GM12878 (cell line): ENCODE measurements at regions of chr2 and their contacts with region 1.

Region 1: DNA sequence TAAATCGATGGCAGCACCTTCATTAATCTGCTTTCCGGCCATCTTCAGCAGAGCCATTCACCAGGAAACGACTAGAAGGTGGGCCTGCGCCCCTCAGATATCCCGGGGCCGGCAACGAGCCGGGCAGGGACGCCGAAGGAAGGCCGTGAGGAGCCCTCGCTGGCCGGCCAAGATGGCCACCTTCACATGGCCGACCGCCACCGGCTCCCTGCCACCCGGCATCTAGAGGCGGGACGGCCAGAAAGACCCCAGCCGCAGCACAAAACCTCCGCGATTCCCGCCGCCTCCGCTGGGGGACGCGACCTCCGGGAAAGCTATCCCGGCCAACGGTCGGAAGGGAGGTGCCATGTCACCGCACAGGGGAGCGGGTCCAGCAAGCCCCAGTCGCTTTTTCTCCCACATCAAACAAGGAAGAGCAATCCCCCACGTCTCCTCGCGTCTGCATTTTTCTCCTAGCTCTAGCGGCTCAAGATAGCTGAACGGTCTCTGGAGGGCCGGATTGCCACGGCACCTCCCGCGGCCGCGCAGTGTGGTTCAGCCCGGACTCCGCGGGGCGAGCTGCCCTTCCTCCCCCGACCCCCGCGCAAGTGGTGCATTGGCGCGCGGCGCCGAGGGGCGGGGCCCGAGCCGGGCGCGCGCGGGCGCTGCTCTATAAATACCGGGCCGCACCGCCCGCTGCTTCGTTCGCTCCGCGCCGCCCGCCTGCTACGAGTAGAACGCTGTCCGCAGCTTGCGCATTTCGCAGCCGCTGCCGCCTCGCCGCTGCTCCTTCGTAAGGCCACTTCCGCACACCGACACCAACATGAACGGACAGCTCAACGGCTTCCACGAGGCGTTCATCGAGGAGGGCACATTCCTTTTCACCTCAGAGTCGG is at the start of gene MAT2A:
- DNase-seq: peak; percentile 56
- ATAC-seq: peak; percentile 81
- H3K4me3 ChIP-seq: peak within 1 kb of the TSS; percentile 86
- H3K27ac ChIP-seq: peak within 1 kb of the TSS; percentile 100
- H3K4me1 ChIP-seq: no peaks in the 10 kb centered on the region
- H3K27me3 ChIP-seq: no peaks in the 10 kb centered on the region
- CTCF ChIP-seq: peak; percentile 65 to 77 (median 74)
- EP300 ChIP-seq: no peak
- POLR2A ChIP-seq: peak; percentile 82
- RAD21 ChIP-seq: no peak
- polyA plus RNA-seq, gene MAT2A: 97.6 to 127 TPM

Region 2: GRCh38 chr2:85354286-85355072 is 184.2 kb before region 1 on chr2 and contains the starts of genes ELMOD3 and RETSAT:
- CTCF ChIA-PET with region 1: interaction called, 3 read pairs
- POLR2A ChIA-PET with region 1: interaction called, 9 read pairs
- RAD21 ChIA-PET with region 1: no interaction called
- SMC1A ChIA-PET with region 1: interaction called, 3 read pairs
- in situ Hi-C with region 1: no loop called
- intact Hi-C with region 1: loop called (anchors 2 kb)
- DNase-seq: peak; percentile 97
- ATAC-seq: peak; percentile 98
- H3K4me3 ChIP-seq: peak within 1 kb of the TSS; percentile 87
- H3K27ac ChIP-seq: peak within 1 kb of the TSS; percentile 74
- H3K4me1 ChIP-seq: peaks cover 4% of the 10 kb centered on the region
- H3K27me3 ChIP-seq: no peaks in the 10 kb centered on the region
- CTCF ChIP-seq: no peak
- EP300 ChIP-seq: no peak; a peak in 1 of 4 replicates
- POLR2A ChIP-seq: peak; percentile 99
- RAD21 ChIP-seq: no peak
- polyA plus RNA-seq, gene ELMOD3: 1.2 to 2.7 TPM
- polyA plus RNA-seq, gene RETSAT: 3.3 to 4.4 TPM

Region 3: DNA sequence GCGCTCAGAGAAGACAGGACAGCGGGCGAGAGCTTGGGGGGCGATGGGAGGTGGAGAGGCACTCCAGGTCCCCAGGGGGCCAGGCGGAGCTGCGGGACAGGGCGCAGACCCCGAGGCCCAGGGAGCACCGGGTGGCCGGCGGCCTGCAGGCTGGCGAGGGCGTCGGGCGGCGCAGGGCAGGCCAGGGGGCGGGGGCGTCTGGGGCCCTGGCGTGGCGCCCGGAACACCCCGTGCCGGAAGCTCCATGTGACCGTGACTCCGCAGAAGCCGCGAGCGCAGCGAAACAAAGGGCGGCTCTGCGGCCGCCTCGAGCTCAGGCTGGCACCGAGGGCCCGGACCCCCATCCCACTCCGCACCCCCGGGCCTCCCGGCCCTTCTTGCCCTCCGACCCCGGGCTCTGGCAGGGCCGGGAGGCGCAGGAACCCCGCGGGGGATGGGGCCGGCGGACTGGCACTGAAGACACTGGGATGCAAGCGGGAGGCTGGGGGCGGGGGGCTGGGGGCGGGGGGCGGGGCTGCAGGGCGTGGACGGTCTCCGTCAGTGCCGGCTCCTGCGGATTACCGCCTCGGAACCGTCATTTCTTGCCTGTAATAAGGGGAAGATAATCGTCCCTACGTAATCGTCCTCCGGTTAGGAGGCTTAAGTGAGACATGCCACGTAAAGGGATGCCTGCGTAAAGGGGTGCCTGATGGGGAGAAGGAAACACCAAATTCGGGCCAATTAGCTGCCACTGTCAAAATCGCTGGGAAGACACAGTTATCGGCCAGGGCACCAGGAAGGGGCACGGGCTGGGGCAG is 101.0 kb before region 1 on chr2:
- CTCF ChIA-PET with region 1: no interaction called
- POLR2A ChIA-PET with region 1: interaction called, 11 read pairs
- RAD21 ChIA-PET with region 1: interaction called, 16 read pairs
- SMC1A ChIA-PET with region 1: interaction called, 18 read pairs
- in situ Hi-C with region 1: no loop called
- intact Hi-C with region 1: no loop called
- DNase-seq: no peak
- ATAC-seq: peak; percentile 94
- H3K4me3 ChIP-seq: peak overlapping the region; percentile 57; the same call in 1 of the 2 replicates
- H3K27ac ChIP-seq: no peak overlapping the region
- H3K4me1 ChIP-seq: peaks cover 8% of the 10 kb centered on the region; the same call in 1 of the 2 replicates
- H3K27me3 ChIP-seq: no peaks in the 10 kb centered on the region
- CTCF ChIP-seq: no peak
- EP300 ChIP-seq: peak in 1 of 2 experiments; percentile 21; a peak in 1 of 4 replicates
- POLR2A ChIP-seq: peak; percentile 88
- RAD21 ChIP-seq: no peak

Region 4: DNA sequence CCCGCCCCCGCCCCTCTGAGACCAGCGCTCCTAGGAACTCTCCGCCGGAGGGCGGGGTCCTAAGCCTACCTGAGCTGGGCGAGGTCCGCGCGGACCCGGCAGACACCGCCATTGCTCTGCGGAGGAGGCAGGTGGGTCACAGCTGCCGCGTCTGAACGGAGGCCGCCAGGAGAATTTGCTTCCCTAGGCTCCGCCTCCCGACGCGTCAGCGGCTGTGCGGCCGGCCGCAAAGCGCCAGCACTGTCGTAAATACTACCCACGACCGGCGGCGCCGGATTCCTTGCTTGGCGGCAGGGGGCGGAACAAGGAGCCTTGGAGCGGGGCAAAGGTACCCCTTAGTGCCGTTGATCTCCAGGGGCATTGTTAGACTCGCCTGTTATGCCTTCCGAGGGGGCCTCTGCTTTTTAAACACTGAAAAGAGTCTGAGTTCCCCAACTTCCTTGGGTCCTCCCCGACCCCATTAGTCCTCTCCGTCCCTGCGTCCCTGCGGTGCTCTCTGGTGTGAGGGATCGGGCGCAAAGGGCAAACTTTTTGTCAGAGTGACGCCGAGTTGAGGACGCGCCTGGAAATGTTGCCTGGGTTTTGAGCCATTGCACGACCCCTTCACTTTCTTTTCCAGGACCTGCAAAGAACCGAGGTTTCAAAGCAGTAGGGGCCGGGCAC is 22.7 kb after region 1 on chr2 and contains the start of gene GGCX:
- CTCF ChIA-PET with region 1: interaction called, 134 read pairs
- POLR2A ChIA-PET with region 1: interaction called, 27 read pairs
- RAD21 ChIA-PET with region 1: interaction called, 4 read pairs
- SMC1A ChIA-PET with region 1: interaction called, 15 read pairs
- in situ Hi-C with region 1: no loop called
- intact Hi-C with region 1: no loop called
- DNase-seq: peak; percentile 73
- ATAC-seq: peak; percentile 97
- H3K4me3 ChIP-seq: peak within 1 kb of the TSS; percentile 98
- H3K27ac ChIP-seq: peak within 1 kb of the TSS; percentile 71
- H3K4me1 ChIP-seq: no peaks in the 10 kb centered on the region; the same call in 1 of the 2 replicates
- H3K27me3 ChIP-seq: no peaks in the 10 kb centered on the region
- CTCF ChIP-seq: no peak
- EP300 ChIP-seq: 0 out of 4 replicates have a peak, but pooled peaks of 1 of the 2 experiments have one; percentile 14
- POLR2A ChIP-seq: peak; percentile 97
- RAD21 ChIP-seq: no peak
- polyA plus RNA-seq, gene GGCX: 46.6 to 52.7 TPM

Region 5: DNA sequence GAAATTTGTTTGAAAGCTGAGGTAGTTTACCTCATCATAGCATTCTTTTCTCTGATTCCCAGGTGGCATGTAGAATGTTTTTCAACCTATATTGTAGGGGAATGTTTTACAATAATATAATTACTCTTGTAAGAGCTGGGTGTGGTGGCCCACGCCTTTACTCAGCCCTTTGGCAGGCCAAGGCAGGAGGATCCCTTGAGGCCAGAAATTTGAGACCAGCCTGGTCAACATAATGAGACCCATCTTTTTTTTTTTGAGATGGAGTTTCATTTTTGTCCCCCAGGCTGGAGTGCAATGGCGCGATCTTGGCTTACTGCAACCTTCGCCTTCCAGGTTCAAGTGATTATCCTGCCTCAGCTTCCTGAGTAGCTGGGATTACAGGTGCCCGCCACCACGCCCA is 80.9 kb after region 1 on chr2:
- CTCF ChIA-PET with region 1: interaction called, 3 read pairs
- POLR2A ChIA-PET with region 1: no interaction called
- RAD21 ChIA-PET with region 1: no interaction called
- SMC1A ChIA-PET with region 1: no interaction called
- in situ Hi-C with region 1: no loop called
- intact Hi-C with region 1: loop called (anchors 5 kb)
- DNase-seq: no peak
- ATAC-seq: no peak
- H3K4me3 ChIP-seq: no peak overlapping the region
- H3K27ac ChIP-seq: no peak overlapping the region
- H3K4me1 ChIP-seq: peaks cover 4% of the 10 kb centered on the region; the same call in 1 of the 2 replicates
- H3K27me3 ChIP-seq: no peaks in the 10 kb centered on the region
- CTCF ChIP-seq: no peak
- EP300 ChIP-seq: no peak
- POLR2A ChIP-seq: no peak
- RAD21 ChIP-seq: no peak

Region 6: GRCh38 chr2:85935746-85936208 is 397.1 kb after region 1 on chr2:
- CTCF ChIA-PET with region 1: no interaction called
- POLR2A ChIA-PET with region 1: no interaction called
- RAD21 ChIA-PET with region 1: no interaction called
- SMC1A ChIA-PET with region 1: no interaction called
- in situ Hi-C with region 1: no loop called
- intact Hi-C with region 1: no loop called
- DNase-seq: no peak
- ATAC-seq: no peak
- H3K4me3 ChIP-seq: no peak overlapping the region
- H3K27ac ChIP-seq: no peak overlapping the region
- H3K4me1 ChIP-seq: no peaks in the 10 kb centered on the region
- H3K27me3 ChIP-seq: no peaks in the 10 kb centered on the region
- CTCF ChIP-seq: no peak
- EP300 ChIP-seq: no peak
- POLR2A ChIP-seq: no peak
- RAD21 ChIP-seq: no peak